Mammary epithelial cell (primary cell): ENCODE measurements at regions of chr1 and their contacts with region 1.

Region 1: GRCh38 chr1:21564521-21565095 is 55.4 kb downstream of the ALPL start:
- DNase-seq: no peak
- H3K4me3 ChIP-seq: no peak overlapping the region
- H3K27ac ChIP-seq: no peak overlapping the region
- H3K4me1 ChIP-seq: peaks cover 3% of the 10 kb centered on the region
- H3K27me3 ChIP-seq: no peaks in the 10 kb centered on the region
- CTCF ChIP-seq: no peak

Region 2: GRCh38 chr1:21490774-21491553 is 73.6 kb before region 1 on chr1:
- CTCF ChIA-PET with region 1: no interaction called
- dilution Hi-C with region 1: loop called (anchors 5 kb)
- in situ Hi-C with region 1: no loop called
- intact Hi-C with region 1: no loop called
- DNase-seq: peak; percentile 56
- H3K4me3 ChIP-seq: no peak overlapping the region
- H3K27ac ChIP-seq: no peak overlapping the region
- H3K4me1 ChIP-seq: no peaks in the 10 kb centered on the region
- H3K27me3 ChIP-seq: no peaks in the 10 kb centered on the region
- CTCF ChIP-seq: peak; percentile 61 to 74

Region 3: GRCh38 chr1:21647431-21648351 is 83.1 kb after region 1 on chr1:
- CTCF ChIA-PET with region 1: no interaction called
- dilution Hi-C with region 1: loop called (anchors 5 kb)
- in situ Hi-C with region 1: no loop called
- intact Hi-C with region 1: no loop called
- DNase-seq: peak; percentile 33
- H3K4me3 ChIP-seq: no peak overlapping the region
- H3K27ac ChIP-seq: no peak overlapping the region
- H3K4me1 ChIP-seq: peaks cover 6% of the 10 kb centered on the region
- H3K27me3 ChIP-seq: peaks cover 2% of the 10 kb centered on the region
- CTCF ChIP-seq: no peak

Region 4: GRCh38 chr1:21669258-21670058 is 104.8 kb after region 1 on chr1 and contains the start of gene RAP1GAP:
- CTCF ChIA-PET with region 1: no interaction called
- dilution Hi-C with region 1: no loop called
- in situ Hi-C with region 1: no loop called
- intact Hi-C with region 1: no loop called
- DNase-seq: no peak
- H3K4me3 ChIP-seq: peak within 1 kb of the TSS in 1 of 3 experiments; percentile 25
- H3K27ac ChIP-seq: no peak within 1 kb of the TSS
- H3K4me1 ChIP-seq: peaks cover 12% of the 10 kb centered on the region
- H3K27me3 ChIP-seq: peaks cover 12% of the 10 kb centered on the region
- CTCF ChIP-seq: no peak
- total RNA-seq, gene RAP1GAP: 0.17 to 0.54 TPM

Region 5: DNA sequence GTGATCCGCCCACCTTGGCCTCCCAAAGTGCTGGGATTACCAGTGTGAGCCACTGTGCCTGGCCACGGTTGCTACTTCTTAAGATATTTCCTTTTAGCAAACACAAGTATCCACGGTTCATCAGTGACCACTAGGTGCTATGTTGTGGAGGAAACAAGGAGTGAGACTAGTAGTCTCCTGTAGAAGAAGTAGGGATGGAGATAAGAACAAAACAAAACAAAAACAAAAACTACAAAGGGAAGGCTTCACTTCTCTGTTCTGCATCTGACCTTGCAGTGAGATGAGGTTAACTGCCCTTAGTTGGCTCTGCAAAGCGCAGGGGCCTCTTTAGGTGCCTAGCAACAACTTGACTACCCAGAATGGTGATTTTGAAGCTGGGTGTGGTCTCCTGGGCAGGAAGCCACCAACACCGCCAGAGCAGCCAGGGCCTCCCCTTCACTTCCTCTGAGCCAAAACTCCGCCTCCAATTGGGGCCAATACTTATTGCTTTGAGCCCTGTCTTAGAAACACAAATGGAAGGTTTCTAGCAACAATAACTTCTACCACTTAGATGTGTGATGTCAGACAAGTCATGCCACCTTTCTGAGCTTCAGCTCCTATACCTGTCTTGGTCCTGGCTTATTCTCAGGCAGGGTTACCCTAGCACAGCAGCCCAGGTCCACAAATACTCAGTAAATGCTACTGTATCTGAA is 475.1 kb after region 1 on chr1:
- CTCF ChIA-PET with region 1: no interaction called
- dilution Hi-C with region 1: no loop called
- in situ Hi-C with region 1: no loop called
- intact Hi-C with region 1: no loop called
- DNase-seq: peak; percentile 57
- H3K4me3 ChIP-seq: no peak overlapping the region
- H3K27ac ChIP-seq: no peak overlapping the region
- H3K4me1 ChIP-seq: peaks cover 43% of the 10 kb centered on the region
- H3K27me3 ChIP-seq: no peaks in the 10 kb centered on the region
- CTCF ChIP-seq: no peak